ENCODE measurements at regions of chr3 and their contacts with region 1.

Region 1: DNA sequence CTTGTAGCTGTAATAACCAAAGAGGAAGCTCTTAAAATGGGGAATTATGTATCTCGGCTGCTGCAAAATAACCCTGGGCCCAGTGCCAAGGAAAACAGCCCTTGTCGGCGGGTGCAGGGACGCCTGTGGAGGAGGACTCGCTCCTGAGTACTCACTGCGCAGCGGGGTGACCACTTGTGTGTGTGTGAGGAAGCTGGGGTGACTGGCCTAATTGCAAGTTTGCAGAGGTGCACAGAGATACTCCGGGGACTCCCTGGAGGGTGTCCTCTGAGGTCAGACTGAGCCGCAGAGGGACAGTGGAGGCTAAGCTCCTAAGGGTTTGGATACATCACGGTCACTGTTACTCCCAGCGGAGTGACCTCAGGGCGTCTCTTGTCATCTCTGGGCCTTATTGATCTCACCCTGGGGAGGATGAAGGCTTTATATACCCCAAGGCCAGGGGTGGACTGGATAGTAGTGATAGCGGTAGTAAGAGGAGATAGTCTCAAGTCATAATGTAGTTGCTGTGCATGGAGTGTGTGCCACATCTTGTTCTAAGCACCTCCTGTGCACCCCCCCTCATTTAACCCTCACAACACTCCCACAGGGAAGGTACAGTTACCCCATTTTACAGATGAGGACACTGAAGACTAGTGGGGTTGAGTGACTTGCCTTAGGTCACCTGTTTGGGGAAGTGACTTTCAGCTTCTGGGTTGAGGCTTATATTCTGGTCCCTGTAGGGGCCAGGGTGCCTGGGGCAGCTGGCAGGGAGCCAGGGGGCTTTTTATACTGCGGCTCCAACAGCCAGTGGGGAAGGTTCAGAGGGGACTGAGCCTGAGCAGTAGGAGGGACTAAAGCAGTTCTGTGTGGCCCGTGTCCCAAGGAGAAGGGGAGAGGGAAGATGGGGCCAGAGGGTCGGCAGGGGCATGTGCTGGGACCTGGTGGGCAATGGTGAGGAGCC is 37.4 kb downstream of the SLC6A6 start:
- DNase-seq: peak; percentile 80 to 86
- ATAC-seq: peak; percentile 14 to 64 (median 48)
- H3K4me3 ChIP-seq: peak overlapping the region in 1 of 10 donors; percentile 4
- H3K27ac ChIP-seq: peak overlapping the region in 8 of 10 donors; percentile 4 to 71 (median 38)
- H3K4me1 ChIP-seq: peaks cover 40 to 83% (median 75%) of the 10 kb centered on the region in 9 donors
- H3K27me3 ChIP-seq: peaks cover 0 to 39% (median 7%) of the 10 kb centered on the region in 7 donors
- CTCF ChIP-seq: no peak

Region 2: GRCh38 chr3:14319654-14320182 is 120.1 kb before region 1 on chr3:
- intact Hi-C with region 1: no loop called
- DNase-seq: no peak
- ATAC-seq: peak in 3 of 8 donors; percentile 53 to 59 (median 53)
- H3K4me3 ChIP-seq: no peak overlapping the region
- H3K27ac ChIP-seq: peak overlapping the region in 1 of 10 donors; percentile 10
- H3K4me1 ChIP-seq: peaks cover 0 to 21% (median 16%) of the 10 kb centered on the region in 9 donors
- H3K27me3 ChIP-seq: peaks cover 0 to 39% (median 19%) of the 10 kb centered on the region in 7 donors
- CTCF ChIP-seq: no peak

Region 3: GRCh38 chr3:14480207-14481025 is 40.6 kb after region 1 on chr3:
- intact Hi-C with region 1: loop called in 1 of 10 experiments (anchors 5 kb)
- DNase-seq: peak in 1 of 2 donors; percentile 63
- ATAC-seq: peak; percentile 34 to 77 (median 68)
- H3K4me3 ChIP-seq: no peak overlapping the region
- H3K27ac ChIP-seq: peak overlapping the region in 4 of 10 donors; percentile 35 to 53 (median 40)
- H3K4me1 ChIP-seq: peaks cover 5 to 48% (median 32%) of the 10 kb centered on the region in 9 donors
- H3K27me3 ChIP-seq: peaks cover 0 to 9% (median 0%) of the 10 kb centered on the region in 7 donors
- CTCF ChIP-seq: no peak

Region 4: DNA sequence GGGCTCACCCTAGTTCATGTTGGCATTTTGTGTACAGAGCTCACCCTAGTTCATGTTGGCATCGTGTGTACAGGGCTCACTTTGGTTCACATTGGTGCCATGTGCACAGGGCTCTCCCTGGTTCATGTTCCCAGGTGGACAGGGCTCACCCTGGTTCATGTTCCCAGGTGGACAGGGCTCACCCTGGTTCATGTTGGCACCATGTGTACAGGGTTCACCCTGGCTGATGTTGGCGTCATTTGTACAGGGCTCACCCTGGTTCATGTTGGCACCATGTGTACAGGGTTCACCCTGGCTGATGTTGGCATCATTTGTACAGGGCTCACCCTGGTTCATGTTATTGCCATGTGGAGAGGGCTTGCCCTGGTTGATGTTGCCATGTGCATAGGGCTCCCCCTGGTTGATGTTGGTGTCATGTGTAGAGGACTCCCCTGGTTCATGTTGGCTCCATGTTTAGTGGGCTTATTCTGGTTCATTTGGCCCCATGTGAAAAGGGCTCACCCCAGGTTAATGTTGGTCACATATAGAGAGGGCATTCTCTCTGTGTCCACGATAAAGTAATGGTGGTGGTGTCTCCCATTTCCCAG is 475.9 kb after region 1 on chr3:
- intact Hi-C with region 1: loop called in 1 of 10 experiments (anchors 5 kb)
- DNase-seq: no peak
- ATAC-seq: peak in 3 of 8 donors; percentile 10 to 34 (median 17)
- H3K4me3 ChIP-seq: no peak overlapping the region
- H3K27ac ChIP-seq: no peak overlapping the region
- H3K4me1 ChIP-seq: peaks cover 0 to 10% (median 2%) of the 10 kb centered on the region in 9 donors
- H3K27me3 ChIP-seq: peaks cover 0 to 4% (median 0%) of the 10 kb centered on the region in 7 donors
- CTCF ChIP-seq: peak in 5 of 9 donors; percentile 20 to 34 (median 25)